OCI-LY7 (cell line): ENCODE measurements at regions of chr11 and their contacts with region 1.

Region 1: GRCh38 chr11:17063171-17064002 is 14.1 kb downstream of the RPS13 start:
- DNase-seq: peak; percentile 32
- H3K4me3 ChIP-seq: no peak overlapping the region
- H3K27ac ChIP-seq: no peak overlapping the region
- H3K4me1 ChIP-seq: no peaks in the 10 kb centered on the region
- CTCF ChIP-seq: peak; percentile 76

Region 2: DNA sequence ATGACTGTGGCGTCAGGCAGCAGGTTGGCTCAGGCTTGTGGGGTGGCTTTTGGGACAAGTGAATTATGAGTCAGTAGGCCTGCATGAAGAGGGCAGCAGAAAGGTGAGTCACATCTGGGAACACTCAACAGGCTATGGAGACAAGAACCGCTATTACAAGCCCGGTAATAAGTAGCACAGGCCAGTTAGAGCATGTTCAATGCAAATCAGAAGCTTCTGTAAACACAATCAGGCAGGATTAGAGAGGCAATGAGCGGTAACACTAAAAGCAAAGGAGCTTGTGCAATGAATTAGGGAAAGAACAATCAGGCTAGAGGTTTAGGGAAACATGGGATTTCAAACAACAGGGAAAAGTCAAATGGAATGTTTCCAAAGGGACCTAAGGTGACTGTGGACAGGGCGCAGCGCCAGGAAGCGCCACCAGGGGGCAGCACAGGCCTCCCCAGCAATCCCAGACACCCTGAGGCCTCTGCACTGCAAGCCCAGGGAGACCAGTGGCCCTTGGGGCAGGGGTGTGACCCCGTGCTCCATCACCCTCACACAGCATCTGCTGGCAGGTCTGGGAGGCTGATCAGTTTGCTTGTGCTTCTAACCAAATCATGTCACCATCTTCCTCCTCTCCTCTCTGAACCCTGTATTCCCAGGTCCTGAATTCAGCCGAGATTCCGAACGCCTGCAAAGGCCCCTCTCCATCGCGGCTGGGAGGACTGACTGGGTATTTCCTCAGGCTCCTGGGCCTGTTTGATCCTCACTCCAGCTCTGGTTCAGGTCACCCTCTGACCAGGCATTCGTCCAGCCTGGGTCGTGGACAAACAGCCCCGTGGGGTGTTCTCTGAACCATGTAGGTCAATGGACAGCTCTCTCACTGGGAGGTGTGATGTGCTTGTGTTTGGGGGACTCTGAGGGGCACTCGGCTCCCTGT is 275.0 kb before region 1 on chr11:
- CTCF ChIA-PET with region 1: no interaction called
- POLR2A ChIA-PET with region 1: no interaction called
- intact Hi-C with region 1: no loop called
- DNase-seq: peak; percentile 42
- H3K4me3 ChIP-seq: no peak overlapping the region
- H3K27ac ChIP-seq: no peak overlapping the region
- H3K4me1 ChIP-seq: no peaks in the 10 kb centered on the region
- CTCF ChIP-seq: peak; percentile 90

Region 3: DNA sequence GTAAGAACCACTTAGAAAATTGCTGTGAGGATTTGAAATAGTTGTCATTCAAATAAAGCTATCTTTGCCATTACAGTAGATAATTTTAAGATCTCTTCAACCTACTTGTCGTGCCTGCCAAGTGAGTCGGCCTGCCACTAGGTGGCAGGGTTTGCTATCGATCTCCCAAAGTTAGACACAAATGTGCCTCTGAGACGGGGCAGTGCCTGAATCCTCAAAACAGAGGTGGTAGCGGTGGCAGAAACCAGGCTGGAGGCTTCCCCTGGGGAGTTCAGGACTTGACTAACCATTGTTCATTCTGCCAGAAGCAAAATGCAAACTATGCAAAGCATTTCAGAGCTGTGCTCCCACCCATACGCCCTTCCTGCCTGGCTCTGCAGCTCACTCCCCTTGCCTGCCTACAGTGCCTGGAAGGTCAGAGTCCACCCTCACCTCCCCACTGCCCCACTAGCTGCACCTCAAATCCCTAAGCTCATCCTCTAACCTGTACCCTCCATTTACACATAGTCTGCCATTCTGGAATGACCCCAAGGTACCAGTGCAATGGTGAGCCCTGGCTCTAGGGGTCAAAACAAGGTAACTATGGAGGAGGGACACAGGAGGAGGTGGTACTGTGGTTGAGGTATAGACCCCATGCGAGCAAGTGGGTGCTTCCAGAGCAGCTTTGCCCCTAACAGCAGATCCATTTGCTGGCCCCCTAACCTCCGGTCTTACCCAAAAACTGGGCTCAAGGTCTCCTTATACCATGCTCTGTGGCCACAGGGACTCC is 242.9 kb before region 1 on chr11:
- CTCF ChIA-PET with region 1: no interaction called
- POLR2A ChIA-PET with region 1: no interaction called
- intact Hi-C with region 1: loop called (anchors 1 kb)
- DNase-seq: peak; percentile 70
- H3K4me3 ChIP-seq: no peak overlapping the region
- H3K27ac ChIP-seq: no peak overlapping the region
- H3K4me1 ChIP-seq: no peaks in the 10 kb centered on the region
- CTCF ChIP-seq: peak; percentile 96

Region 4: DNA sequence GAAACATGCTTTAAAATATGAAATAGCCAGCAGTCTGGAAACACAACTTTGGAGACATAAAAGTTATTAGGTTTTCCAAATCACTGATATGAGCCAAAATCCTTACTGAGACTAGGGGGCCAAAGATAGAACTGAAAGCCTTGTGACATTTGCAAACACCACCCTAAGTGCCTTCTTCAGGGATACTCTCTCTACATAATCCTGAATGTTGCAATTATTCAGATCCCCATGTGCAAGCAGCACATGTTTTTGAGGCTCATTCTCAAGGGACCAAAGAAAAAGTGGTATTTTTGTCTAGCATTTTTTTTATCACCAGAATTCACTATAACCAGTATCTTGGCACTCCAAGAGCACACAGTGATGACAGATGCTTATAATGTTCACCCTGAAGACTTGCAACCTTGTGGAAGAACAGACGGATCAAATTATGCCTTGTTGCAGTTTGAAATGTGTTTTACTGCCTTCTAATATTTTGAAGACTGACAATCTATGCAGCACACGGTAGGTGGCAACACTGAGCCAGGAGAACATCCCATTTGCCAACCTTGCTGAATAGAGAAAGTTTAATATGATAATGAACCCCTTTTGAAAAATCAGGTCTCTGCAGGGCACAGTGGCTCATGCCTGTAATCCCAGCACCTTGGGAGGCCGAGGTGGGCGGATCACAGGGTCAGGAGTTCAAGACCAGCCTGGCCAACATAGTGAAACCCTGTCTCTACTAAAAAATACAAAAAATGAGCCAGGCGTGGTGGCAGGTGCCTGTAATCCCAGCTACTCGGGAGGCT is 127.7 kb before region 1 on chr11:
- CTCF ChIA-PET with region 1: no interaction called
- POLR2A ChIA-PET with region 1: no interaction called
- intact Hi-C with region 1: loop called (anchors 5 kb)
- DNase-seq: peak; percentile 38
- H3K4me3 ChIP-seq: no peak overlapping the region
- H3K27ac ChIP-seq: no peak overlapping the region
- H3K4me1 ChIP-seq: no peaks in the 10 kb centered on the region
- CTCF ChIP-seq: peak; percentile 77

Region 5: GRCh38 chr11:17102462-17102861 is 39.1 kb after region 1 on chr11:
- CTCF ChIA-PET with region 1: no interaction called
- POLR2A ChIA-PET with region 1: no interaction called
- intact Hi-C with region 1: no loop called
- DNase-seq: no peak
- H3K4me3 ChIP-seq: no peak overlapping the region
- H3K27ac ChIP-seq: no peak overlapping the region
- H3K4me1 ChIP-seq: no peaks in the 10 kb centered on the region
- CTCF ChIP-seq: no peak